Keratinocyte (primary cell): ENCODE measurements at regions of chr5 and their contacts with region 1.

Region 1: DNA sequence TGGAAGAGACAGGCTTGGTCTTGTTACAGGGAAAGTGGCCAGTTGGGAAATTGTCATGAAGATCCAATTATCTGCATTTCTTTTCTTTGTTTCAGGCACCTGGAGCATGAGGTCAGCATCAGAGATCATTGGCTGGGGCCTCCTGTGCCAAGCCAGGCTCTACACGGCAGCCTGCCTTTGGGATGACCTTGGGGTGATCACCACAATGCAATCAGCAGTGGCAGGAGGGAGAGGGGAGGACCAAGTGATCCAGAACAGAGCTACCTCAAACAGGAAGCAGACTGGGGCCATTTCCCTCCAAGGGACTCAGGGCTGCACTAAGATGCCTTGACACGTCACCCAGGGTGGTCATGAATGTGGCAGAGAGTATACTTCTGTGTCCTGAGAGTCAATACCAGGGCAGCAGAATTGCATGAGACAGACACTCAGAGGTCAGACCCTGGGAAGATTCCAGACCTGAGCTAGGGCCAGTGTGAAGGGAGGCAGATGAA is 8.9 kb downstream of the SMIM23 start:
- DNase-seq: no peak
- H3K4me3 ChIP-seq: no peak overlapping the region
- H3K27ac ChIP-seq: no peak overlapping the region
- H3K4me1 ChIP-seq: no peaks in the 10 kb centered on the region
- H3K27me3 ChIP-seq: peaks cover 5% of the 10 kb centered on the region
- CTCF ChIP-seq: no peak

Region 2: GRCh38 chr5:171724468-171725204 is 69.9 kb before region 1 on chr5:
- dilution Hi-C with region 1: loop called (anchors 5 kb)
- DNase-seq: no peak
- H3K4me3 ChIP-seq: no peak overlapping the region
- H3K27ac ChIP-seq: no peak overlapping the region
- H3K4me1 ChIP-seq: no peaks in the 10 kb centered on the region
- H3K27me3 ChIP-seq: peaks cover 4% of the 10 kb centered on the region
- CTCF ChIP-seq: no peak